Posterior vena cava (tissue), 2 donors: ENCODE measurements at regions of chr16 and their contacts with region 1.

Region 1: DNA sequence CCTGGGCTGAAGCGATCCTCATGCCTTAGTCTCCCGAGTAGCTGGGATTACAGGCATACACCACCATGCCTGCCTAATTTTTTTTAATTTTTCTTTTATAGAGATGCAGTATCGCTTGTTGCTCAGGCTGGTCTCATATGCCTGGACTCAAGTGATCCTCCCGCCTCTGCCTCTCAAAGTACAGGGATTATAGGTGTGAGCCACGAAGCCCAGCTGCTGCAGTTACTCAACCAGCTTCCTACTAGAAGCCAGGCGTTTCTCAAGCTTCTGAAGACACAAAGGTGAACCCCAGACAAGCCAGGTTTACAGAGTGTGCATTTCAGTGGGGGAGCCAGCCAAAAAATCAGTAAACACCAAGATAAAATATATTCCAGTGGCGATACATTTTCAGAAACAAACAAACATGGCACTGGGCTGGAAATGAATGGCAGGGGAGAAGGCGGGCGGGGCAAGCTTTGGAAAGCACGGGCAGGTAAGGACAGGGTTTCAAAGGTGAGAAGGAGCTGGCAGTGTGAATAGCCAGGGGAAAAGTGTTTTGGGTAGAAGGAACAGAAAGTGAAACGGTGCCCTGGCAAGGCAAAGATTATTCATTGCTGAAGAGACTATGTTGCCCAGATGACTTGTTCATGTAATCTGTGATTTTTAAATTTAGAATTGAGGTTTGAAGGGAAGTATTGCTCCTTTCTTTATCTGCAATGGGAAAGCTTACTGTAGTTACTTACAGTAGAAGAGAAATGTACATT is 471.1 kb downstream of the WWOX start:
- DNase-seq: no peak

Region 2: DNA sequence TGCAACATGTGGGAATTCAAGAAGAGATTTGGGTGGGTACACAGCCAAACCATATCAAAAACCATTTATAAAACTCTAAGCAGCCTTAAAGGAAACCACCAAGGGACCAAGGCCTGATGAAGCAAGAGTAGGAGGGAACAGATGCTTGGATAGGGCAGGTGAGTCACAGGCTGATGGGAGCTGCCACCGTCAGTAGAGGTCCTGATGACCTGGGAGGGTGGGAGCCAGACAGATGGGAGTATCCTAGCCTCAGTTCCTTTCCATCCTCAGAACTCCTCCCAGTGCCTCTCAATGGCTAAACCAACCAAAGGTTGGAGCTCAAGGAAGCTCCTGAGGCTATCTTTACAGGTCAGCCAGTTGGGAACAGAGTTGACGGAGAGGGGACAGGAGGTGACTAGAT is 37.7 kb before region 1 on chr16:
- intact Hi-C with region 1: loop called in 1 of 2 experiments (anchors 1 kb)
- DNase-seq: no peak

Region 3: DNA sequence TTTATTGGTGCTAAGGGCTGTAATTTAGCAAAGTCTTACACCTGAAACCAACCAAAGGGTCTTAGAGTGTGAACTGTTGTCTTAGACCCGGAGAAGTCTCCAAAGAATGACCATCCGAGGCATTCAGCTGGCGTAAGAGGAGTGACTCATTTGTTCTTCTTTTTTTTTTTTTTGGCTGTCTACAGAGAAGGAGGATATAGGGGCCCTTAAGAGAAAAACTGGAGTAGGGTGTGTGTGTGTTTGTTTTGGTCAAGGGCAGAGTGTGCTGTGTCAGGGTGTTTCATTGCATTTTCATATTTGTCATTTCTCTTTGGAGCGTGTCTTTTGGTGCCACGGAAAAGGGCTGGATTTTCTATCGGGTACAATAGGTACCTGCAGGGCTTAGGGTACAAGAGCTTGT is 36.9 kb after region 1 on chr16:
- intact Hi-C with region 1: no loop called
- DNase-seq: no peak